ENCODE measurements at regions of chr2 and their contacts with region 1.

Region 1: DNA sequence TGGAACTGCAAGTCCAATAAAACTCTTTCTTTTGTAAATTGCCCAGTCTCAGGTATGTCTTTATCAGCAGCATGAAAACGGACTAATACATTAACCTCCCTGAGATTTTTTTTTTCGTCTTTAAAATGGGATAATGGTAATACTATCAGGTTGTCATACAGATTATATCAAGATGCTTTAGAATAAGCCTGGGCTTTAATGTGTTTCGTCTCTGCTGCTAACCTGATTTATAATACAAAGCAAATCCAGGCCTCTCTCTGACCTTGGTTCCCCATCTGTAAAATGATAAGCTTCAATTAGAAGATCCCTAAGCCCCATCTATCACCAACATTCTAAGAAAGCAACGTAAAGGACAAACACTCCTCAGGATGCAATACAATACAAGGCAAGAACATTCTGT is 283.5 kb downstream of the LRATD1 start:
- DNase-seq: no peak
- ATAC-seq: no peak
- H3K4me3 Mint-ChIP-seq: no peak overlapping the region
- H3K27ac Mint-ChIP-seq: no peak overlapping the region
- H3K4me1 Mint-ChIP-seq: no peaks in the 10 kb centered on the region
- H3K27me3 Mint-ChIP-seq: no peaks in the 10 kb centered on the region
- CTCF ChIP-seq: no peak

Region 2: GRCh38 chr2:14340703-14341102 is 575.3 kb before region 1 on chr2:
- CTCF ChIA-PET with region 1: no interaction called
- POLR2A ChIA-PET with region 1: no interaction called
- intact Hi-C with region 1: no loop called
- DNase-seq: no peak
- ATAC-seq: no peak
- H3K4me3 Mint-ChIP-seq: no peak overlapping the region
- H3K27ac Mint-ChIP-seq: no peak overlapping the region
- H3K4me1 Mint-ChIP-seq: no peaks in the 10 kb centered on the region
- H3K27me3 Mint-ChIP-seq: no peaks in the 10 kb centered on the region
- CTCF ChIP-seq: no peak

Region 3: GRCh38 chr2:14903709-14904374 is 12.1 kb before region 1 on chr2:
- CTCF ChIA-PET with region 1: interaction called, 23 read pairs
- POLR2A ChIA-PET with region 1: no interaction called
- intact Hi-C with region 1: no loop called
- DNase-seq: peak; percentile 79
- ATAC-seq: peak; percentile 99
- H3K4me3 Mint-ChIP-seq: no peak overlapping the region
- H3K27ac Mint-ChIP-seq: no peak overlapping the region
- H3K4me1 Mint-ChIP-seq: no peaks in the 10 kb centered on the region
- H3K27me3 Mint-ChIP-seq: peaks cover 3% of the 10 kb centered on the region
- CTCF ChIP-seq: peak; percentile 92